ENCODE measurements at regions of chr22 and their contacts with region 1.

Region 1: GRCh38 chr22:36856121-36856791 is 4.5 kb upstream of the NCF4 start:
- DNase-seq: peak; percentile 91 to 95 (median 95)
- ATAC-seq: peak; percentile 91 to 92
- H3K4me3 ChIP-seq: no peak overlapping the region
- H3K27ac ChIP-seq: no peak overlapping the region
- H3K4me1 ChIP-seq: peaks cover 2% of the 10 kb centered on the region
- H3K27me3 ChIP-seq: no peaks in the 10 kb centered on the region

Region 2: GRCh38 chr22:36520423-36520822 is 335.8 kb before region 1 on chr22:
- intact Hi-C with region 1: no loop called
- DNase-seq: no peak
- ATAC-seq: no peak
- H3K4me3 ChIP-seq: no peak overlapping the region
- H3K27ac ChIP-seq: no peak overlapping the region
- H3K4me1 ChIP-seq: no peaks in the 10 kb centered on the region
- H3K27me3 ChIP-seq: no peaks in the 10 kb centered on the region

Region 3: GRCh38 chr22:36546092-36546804 is 310.0 kb before region 1 on chr22:
- intact Hi-C with region 1: loop called in 3 of 4 experiments (anchors 2 to 5 kb)
- DNase-seq: peak in 2 of 3 donors; percentile 32 to 56
- ATAC-seq: peak; percentile 59 to 69
- H3K4me3 ChIP-seq: no peak overlapping the region
- H3K27ac ChIP-seq: no peak overlapping the region
- H3K4me1 ChIP-seq: no peaks in the 10 kb centered on the region
- H3K27me3 ChIP-seq: no peaks in the 10 kb centered on the region

Region 4: GRCh38 chr22:36781656-36782627 is 74.3 kb before region 1 on chr22:
- intact Hi-C with region 1: loop called in 3 of 4 experiments (anchors 5 kb)
- DNase-seq: peak; percentile 77 to 90 (median 90)
- ATAC-seq: peak; percentile 76 to 94
- H3K4me3 ChIP-seq: no peak overlapping the region
- H3K27ac ChIP-seq: no peak overlapping the region
- H3K4me1 ChIP-seq: no peaks in the 10 kb centered on the region
- H3K27me3 ChIP-seq: no peaks in the 10 kb centered on the region

Region 5: DNA sequence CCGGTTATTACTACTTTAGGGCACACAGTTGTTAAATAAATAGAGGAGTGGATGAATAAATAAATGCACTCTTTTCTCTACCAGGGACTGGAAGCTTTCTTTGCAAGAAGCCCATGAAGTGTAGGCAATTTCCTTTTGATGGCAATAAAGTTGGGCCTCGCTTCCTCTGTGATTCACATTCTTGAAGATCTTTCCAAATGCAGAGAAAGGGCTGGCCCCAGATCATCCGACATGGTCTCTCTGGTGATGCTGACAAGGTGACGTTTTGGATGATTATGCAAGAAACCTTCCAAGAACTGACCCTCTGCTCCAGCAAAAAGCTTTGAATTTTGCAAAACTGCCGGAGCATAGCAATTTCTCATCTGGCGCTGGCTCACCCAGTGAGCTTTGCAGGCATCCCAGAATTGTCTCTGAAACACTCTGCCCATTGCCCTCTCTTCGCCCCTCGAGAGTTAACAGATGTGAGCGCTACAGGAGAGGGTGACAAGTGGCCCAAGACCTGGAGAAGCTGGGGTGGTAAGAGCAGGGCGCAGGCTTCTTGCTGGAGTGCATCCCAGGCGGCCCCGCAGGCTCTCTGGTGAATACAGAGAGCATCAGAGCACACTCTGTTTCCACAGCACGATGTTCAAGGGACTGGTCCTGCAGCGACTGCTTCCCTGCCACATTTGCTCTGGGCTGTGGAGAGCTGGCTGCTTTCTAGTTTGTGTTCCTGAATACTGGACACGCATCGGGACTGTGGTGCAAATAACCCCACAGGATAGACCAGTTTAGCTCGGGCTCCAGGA is 68.9 kb before region 1 on chr22:
- intact Hi-C with region 1: loop called in 3 of 4 experiments (anchors 5 kb)
- DNase-seq: no peak
- ATAC-seq: no peak
- H3K4me3 ChIP-seq: no peak overlapping the region
- H3K27ac ChIP-seq: no peak overlapping the region
- H3K4me1 ChIP-seq: no peaks in the 10 kb centered on the region
- H3K27me3 ChIP-seq: no peaks in the 10 kb centered on the region

Region 6: GRCh38 chr22:36977947-36978660 is 121.8 kb after region 1 on chr22:
- intact Hi-C with region 1: loop called in 1 of 4 experiments (anchors 10 kb)
- DNase-seq: peak; percentile 92 to 96 (median 95)
- ATAC-seq: peak; percentile 96 to 97
- H3K4me3 ChIP-seq: peak overlapping the region; percentile 39
- H3K27ac ChIP-seq: no peak overlapping the region
- H3K4me1 ChIP-seq: no peaks in the 10 kb centered on the region
- H3K27me3 ChIP-seq: no peaks in the 10 kb centered on the region

Measured in right cardiac atrium (tissue), 5 donors.